ENCODE measurements at regions of chr19 and their contacts with region 1.

Region 1: DNA sequence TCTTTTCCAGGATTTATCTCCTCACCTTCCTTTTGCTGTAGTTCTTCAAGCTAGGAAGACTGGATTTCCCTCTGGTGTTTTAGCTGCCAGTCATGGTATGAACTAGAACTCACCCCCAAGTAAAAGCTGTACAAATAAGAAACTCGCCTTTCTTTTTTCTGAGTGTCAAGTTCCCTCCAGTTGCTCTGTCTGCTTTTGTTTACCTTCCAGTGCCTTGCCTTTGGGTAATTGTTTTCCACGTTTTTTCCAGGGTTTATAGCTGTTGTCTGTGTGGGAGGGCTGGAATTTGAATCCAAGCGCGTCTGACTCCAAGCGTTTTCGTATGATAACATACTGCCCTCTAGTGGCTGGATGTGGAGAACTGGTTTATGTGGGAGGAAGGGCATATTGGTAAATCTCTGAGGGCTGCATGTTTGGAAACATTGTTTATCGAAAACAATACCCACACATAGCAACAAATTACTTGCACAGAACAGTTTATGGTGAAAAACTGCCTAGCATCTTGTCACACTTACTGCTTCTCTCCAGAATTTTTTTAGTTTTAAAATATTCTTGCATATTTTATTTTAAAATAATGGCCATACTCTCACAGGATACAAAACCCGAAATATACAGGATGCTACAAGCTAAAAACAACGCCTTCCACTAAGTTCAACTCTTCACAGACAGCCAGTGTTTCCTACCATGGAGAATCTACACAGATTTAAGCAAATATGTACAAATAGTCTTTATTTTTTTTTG is 19.2 kb downstream of the RCN3 start:
- DNase-seq: peak; percentile 74 to 89 (median 76)
- ATAC-seq: peak; percentile 88
- H3K4me3 ChIP-seq: no peak overlapping the region
- H3K27ac ChIP-seq: no peak overlapping the region
- H3K4me1 ChIP-seq: peaks cover 2 to 22% of the 10 kb centered on the region in 2 experiments; a peak in 3 of 5 replicates
- H3K27me3 ChIP-seq: no peaks in the 10 kb centered on the region
- CTCF ChIP-seq: peak; percentile 84 to 91 (median 85)
- EP300 ChIP-seq: no peak
- POLR2A ChIP-seq: no peak
- RAD21 ChIP-seq: peak; percentile 87 to 90

Region 2: GRCh38 chr19:49570138-49570856 is 23.3 kb after region 1 on chr19:
- CTCF ChIA-PET with region 1: interaction called, 6 read pairs
- POLR2A ChIA-PET with region 1: interaction called, 3 read pairs
- in situ Hi-C with region 1: no loop called
- intact Hi-C with region 1: loop called (anchors 1 kb)
- DNase-seq: peak; percentile 81 to 93 (median 82)
- ATAC-seq: peak; percentile 89
- H3K4me3 ChIP-seq: no peak overlapping the region
- H3K27ac ChIP-seq: peak overlapping the region; percentile 53
- H3K4me1 ChIP-seq: peaks cover 17 to 21% of the 10 kb centered on the region in 2 experiments
- H3K27me3 ChIP-seq: no peaks in the 10 kb centered on the region
- CTCF ChIP-seq: peak; percentile 98 to 100 (median 99)
- EP300 ChIP-seq: no peak
- POLR2A ChIP-seq: no peak
- RAD21 ChIP-seq: peak; percentile 89 to 90

Region 3: GRCh38 chr19:49645592-49645991 is 98.6 kb after region 1 on chr19:
- CTCF ChIA-PET with region 1: no interaction called
- POLR2A ChIA-PET with region 1: no interaction called
- in situ Hi-C with region 1: no loop called
- intact Hi-C with region 1: no loop called
- DNase-seq: no peak
- ATAC-seq: no peak
- H3K4me3 ChIP-seq: no peak overlapping the region
- H3K27ac ChIP-seq: no peak overlapping the region
- H3K4me1 ChIP-seq: peaks cover 17 to 30% of the 10 kb centered on the region in 2 experiments; a peak in 4 of 5 replicates
- H3K27me3 ChIP-seq: no peaks in the 10 kb centered on the region
- CTCF ChIP-seq: no peak
- EP300 ChIP-seq: no peak
- POLR2A ChIP-seq: no peak
- RAD21 ChIP-seq: no peak

Measured in K562 (cell line).